ENCODE measurements at regions of chr17 and their contacts with region 1.

Region 1: GRCh38 chr17:8118769-8119580 is 661 bp upstream of the ALOXE3 start:
- DNase-seq: peak; percentile 79
- H3K4me3 Mint-ChIP-seq: peak overlapping the region; percentile 89
- H3K27ac Mint-ChIP-seq: peak overlapping the region; percentile 81
- H3K4me1 Mint-ChIP-seq: peaks cover 42% of the 10 kb centered on the region
- H3K27me3 Mint-ChIP-seq: peaks cover 48% of the 10 kb centered on the region

Region 2: GRCh38 chr17:8057691-8058114 is 61.3 kb before region 1 on chr17:
- intact Hi-C with region 1: loop called (anchors 10 kb)
- DNase-seq: peak; percentile 30
- H3K4me3 Mint-ChIP-seq: no peak overlapping the region
- H3K27ac Mint-ChIP-seq: no peak overlapping the region
- H3K4me1 Mint-ChIP-seq: peaks cover 26% of the 10 kb centered on the region
- H3K27me3 Mint-ChIP-seq: peaks cover 47% of the 10 kb centered on the region

Region 3: DNA sequence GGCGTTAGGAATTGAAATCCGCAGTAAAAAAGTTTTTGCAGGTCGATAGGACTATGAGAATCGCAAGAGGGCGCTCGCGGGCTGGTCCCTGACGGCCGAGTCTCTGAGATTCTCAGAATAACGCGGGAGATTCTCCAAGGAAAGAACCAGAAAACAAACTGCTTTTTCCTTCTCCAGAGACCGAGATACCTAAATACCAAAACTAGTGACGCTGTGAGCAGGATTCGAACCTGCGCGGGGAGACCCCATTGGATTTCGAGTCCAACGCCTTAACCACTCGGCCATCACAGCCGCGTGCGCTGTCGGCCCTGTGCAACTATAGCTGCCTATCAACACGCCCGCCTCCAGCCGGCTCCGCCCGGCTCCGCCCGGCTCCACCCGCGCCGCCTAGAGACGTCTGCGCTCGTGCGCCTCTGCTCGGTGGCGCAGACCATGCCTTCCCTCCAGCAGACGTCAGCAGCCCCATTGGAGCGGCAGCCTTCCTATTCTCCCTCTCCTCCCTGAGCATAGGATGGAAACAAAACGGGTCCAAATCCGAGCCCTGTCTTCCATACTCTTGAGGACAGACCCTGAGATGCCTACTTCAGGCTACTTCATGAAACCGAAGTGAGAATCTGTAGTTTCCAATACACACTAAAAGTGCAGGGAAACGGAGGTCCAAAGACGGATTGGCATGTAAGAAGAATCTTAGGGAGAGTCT is 19.8 kb after region 1 on chr17:
- intact Hi-C with region 1: loop called (anchors 1 kb)
- DNase-seq: peak; percentile 97
- H3K4me3 Mint-ChIP-seq: no peak overlapping the region
- H3K27ac Mint-ChIP-seq: no peak overlapping the region
- H3K4me1 Mint-ChIP-seq: peaks cover 2% of the 10 kb centered on the region
- H3K27me3 Mint-ChIP-seq: peaks cover 5% of the 10 kb centered on the region

Region 4: DNA sequence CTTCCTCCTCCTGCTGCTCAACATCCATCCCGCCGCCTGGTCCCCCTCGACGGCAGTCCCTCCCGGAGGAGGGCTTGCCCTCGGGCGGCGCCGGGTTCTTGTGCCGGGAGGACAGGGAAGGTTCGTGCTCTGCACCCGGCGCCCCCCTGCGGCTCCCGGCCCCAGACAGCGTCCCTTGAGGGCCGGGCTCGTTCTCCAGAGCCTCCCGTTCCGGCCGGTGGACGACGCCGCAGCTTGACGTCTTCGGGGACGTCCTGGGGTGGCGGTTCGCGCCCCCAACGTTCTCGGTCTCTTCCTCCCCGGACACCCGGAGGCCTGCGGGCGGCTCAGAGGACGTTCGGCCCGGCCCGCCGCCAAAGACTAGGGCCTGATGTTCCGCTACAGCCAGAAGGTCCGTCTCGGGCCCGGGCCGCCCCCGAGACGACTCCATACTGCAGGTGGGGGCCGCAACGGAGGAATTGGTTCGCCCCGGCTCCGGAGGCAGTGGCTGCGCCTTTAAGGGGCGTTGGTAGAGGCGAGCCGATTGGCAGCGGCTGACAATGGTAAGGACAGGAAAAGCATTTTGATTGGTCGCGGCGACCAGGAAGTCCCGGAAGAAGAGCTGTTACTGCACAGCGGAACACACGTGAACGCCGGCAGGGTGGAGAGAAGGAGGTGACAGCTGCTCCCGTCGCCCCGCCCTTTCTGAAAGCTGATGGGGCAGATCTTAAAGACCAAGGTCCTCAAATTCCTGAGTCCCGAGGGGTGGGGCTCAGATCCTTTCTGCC is 70.9 kb after region 1 on chr17 and contains the start of gene BORCS6:
- intact Hi-C with region 1: loop called (anchors 1 kb)
- DNase-seq: peak; percentile 95
- H3K4me3 Mint-ChIP-seq: no peak within 1 kb of the TSS
- H3K27ac Mint-ChIP-seq: peak within 1 kb of the TSS; percentile 86
- H3K4me1 Mint-ChIP-seq: peaks cover 11% of the 10 kb centered on the region
- H3K27me3 Mint-ChIP-seq: no peaks in the 10 kb centered on the region
- total RNA-seq, gene BORCS6: 7.8 and 8.0 TPM in 2 replicates

Region 5: DNA sequence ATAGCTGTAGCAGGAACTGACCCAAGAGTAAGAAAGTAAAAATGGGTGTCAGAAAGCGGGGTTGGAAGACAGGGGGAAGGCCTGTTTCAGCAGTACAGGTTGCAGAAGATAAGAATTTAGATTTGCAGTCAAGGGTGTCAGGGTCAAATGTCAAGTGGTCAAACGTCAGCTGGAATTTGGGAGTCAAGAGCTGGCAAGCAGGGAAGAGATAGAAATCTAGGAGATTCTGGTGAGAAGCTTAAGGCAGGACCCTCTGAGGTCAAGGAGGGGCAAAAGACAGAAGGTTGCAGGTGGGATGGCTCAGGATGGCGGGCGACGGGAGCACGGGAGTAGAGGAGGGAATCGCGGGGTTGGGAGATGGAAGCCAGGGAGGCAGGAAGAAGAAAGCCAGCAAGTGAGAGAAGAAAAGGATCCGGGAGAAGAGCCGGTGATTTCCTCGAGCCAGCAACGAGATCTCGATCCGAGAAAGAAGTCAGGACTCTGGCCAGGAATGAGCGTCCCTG is 175.9 kb after region 1 on chr17:
- intact Hi-C with region 1: loop called (anchors 5 kb)
- DNase-seq: no peak
- H3K4me3 Mint-ChIP-seq: peak overlapping the region; percentile 90
- H3K27ac Mint-ChIP-seq: peak overlapping the region; percentile 91
- H3K4me1 Mint-ChIP-seq: peaks cover 33% of the 10 kb centered on the region
- H3K27me3 Mint-ChIP-seq: no peaks in the 10 kb centered on the region

Measured in activated T-helper 2 cell treated with anti-CD3 and anti-CD28 coated beads, Interferon-gamma antibody, Interleukin-2, Interleukin-4, amounts not matched to agents 10 μg/mL and 5 μg/mL and 100 μg/mL, durations not matched to agents 14 hours and 24 hours and 36 hours (primary cell).